ENCODE measurements at regions of chr7 and their contacts with region 1.

Region 1: DNA sequence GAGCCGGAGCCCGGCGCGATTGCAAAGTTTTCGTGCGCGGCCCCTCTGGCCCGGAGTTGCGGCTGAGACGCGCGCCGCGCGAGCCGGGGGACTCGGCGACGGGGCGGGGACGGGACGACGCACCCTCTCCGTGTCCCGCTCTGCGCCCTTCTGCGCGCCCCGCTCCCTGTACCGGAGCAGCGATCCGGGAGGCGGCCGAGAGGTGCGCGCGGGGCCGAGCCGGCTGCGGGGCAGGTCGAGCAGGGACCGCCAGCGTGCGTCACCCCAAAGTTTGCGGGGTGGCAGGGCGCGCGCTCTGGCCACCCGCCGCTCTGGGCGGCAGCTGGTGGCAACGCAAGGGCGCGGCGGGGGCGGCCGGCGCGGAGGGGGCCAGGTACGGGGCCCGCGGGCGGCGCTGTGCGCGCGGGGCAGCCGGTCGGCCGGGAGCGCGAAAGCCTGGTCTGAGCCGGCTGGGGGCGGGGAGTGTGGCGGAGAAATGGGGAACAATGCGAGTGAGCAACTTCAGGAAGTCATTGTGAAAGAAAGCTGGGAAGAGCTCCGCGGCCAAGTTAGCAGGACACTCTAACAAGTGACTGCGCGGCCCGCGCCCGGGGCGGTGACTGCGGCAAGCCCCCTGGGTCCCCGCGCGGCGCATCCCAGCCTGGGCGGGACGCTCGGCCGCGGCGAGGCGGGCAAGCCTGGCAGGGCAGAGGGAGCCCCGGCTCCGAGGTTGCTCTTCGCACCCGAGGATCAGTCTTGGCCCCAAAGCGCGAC is at the start of gene IKZF1:
- DNase-seq: peak; percentile 32 to 82 (median 65)
- ATAC-seq: peak; percentile 39
- H3K4me3 ChIP-seq: peak within 1 kb of the TSS; percentile 90 to 96
- H3K4me3 Mint-ChIP-seq: peak within 1 kb of the TSS; percentile 93
- H3K27ac ChIP-seq: peak within 1 kb of the TSS; percentile 91 to 96
- H3K27ac Mint-ChIP-seq: peak within 1 kb of the TSS; percentile 96
- H3K4me1 ChIP-seq: peaks cover 51% of the 10 kb centered on the region
- H3K4me1 Mint-ChIP-seq: peaks cover 51% of the 10 kb centered on the region
- H3K27me3 ChIP-seq: no peaks in the 10 kb centered on the region
- H3K27me3 Mint-ChIP-seq: no peaks in the 10 kb centered on the region
- CTCF ChIP-seq: no peak
- total RNA-seq, gene IKZF1: 248 TPM

Region 2: DNA sequence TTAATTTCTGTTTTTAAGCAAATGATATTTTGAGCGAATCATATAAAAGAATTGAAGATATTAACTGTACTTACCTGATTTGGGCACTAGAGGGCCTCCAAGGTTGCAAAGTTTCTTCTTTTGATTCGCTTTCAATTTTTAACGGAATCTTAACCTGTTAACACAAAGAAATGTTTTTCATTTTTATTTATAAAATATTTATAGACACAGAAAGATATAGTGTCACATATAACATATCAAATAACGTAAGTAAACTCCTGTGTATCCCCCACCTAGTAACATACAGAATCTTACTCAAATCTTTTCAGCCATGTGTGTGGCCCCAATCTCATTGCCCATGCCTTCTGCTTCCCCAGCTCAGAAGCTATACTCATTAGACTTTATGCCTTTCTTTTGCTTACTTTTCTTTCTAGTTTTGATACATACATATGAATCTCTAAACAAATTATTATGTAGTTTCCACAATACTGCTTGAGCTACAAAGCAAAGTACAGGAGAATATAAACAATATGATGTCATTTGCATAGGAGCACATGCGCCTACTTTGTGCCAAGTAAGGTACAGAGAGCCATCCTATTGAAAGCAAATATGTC is 161.8 kb before region 1 on chr7:
- CTCF ChIA-PET with region 1: no interaction called
- POLR2A ChIA-PET with region 1: no interaction called
- intact Hi-C with region 1: loop called in 1 of 2 experiments (anchors 5 kb)
- DNase-seq: peak in 4 of 9 experiments; percentile 38 to 78 (median 59)
- ATAC-seq: peak; percentile 85
- H3K4me3 ChIP-seq: no peak overlapping the region
- H3K4me3 Mint-ChIP-seq: peak overlapping the region; percentile 57
- H3K27ac ChIP-seq: no peak overlapping the region
- H3K27ac Mint-ChIP-seq: peak overlapping the region; percentile 84
- H3K4me1 ChIP-seq: peaks cover 5% of the 10 kb centered on the region
- H3K4me1 Mint-ChIP-seq: peaks cover 15% of the 10 kb centered on the region
- H3K27me3 ChIP-seq: no peaks in the 10 kb centered on the region
- H3K27me3 Mint-ChIP-seq: no peaks in the 10 kb centered on the region
- CTCF ChIP-seq: peak; percentile 91

Region 3: DNA sequence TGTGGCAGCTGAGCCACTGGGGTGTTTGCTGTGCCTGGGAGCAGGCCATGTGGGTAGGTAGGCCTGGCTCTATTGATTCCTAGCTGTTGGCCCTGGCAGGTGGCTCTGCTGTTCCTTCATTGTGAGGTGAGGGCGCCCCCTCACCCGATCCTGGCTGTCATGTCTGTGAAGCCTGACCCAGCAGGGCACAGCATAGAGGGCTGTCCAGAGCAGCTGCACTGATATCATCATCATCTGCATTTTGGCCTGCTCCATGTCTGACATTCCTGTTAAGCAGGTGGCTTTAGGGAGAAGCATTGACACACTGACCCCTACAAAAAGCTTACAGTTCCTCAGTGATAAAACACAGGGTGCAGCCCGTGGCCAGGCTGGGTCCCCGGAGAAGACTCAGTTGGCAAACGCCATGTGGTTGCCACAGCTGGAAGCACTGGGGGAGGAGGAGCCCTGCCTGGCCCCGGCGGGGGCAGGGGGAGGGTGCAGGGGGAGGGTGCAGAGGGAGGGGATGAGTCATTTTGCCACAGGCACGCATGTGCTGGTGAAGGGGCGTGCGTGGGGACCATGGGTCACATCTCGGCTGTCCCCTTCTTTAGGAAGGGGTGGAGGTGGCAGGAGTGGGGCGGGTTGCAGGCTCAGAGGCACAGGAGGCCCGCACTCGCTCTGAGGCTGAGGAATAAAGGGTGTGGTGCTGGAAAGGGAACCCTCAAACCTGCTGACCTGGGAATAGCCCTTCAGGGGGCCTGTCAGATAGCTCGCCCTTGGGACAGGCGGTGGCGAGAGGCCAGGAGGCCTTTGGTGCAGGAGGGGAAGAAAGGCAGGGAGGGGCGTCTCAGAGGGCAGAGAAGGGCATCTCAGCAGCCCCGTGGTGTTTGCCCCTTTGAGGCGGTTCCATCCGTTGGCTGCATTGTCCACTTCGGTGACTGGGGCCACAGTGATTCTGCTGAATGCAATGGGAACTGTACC is 31.7 kb after region 1 on chr7:
- CTCF ChIA-PET with region 1: interaction called, 121 read pairs
- POLR2A ChIA-PET with region 1: interaction called, 1,039 read pairs
- intact Hi-C with region 1: loop called (anchors 1 to 2 kb)
- DNase-seq: peak; percentile 55 to 91 (median 84)
- ATAC-seq: peak; percentile 55
- H3K4me3 ChIP-seq: peak overlapping the region; percentile 10 to 19
- H3K4me3 Mint-ChIP-seq: peak overlapping the region; percentile 77
- H3K27ac ChIP-seq: peak overlapping the region; percentile 40 to 90
- H3K27ac Mint-ChIP-seq: no peak overlapping the region
- H3K4me1 ChIP-seq: peaks cover 99% of the 10 kb centered on the region
- H3K4me1 Mint-ChIP-seq: peaks cover 35% of the 10 kb centered on the region
- H3K27me3 ChIP-seq: no peaks in the 10 kb centered on the region
- H3K27me3 Mint-ChIP-seq: no peaks in the 10 kb centered on the region
- CTCF ChIP-seq: no peak

Region 4: DNA sequence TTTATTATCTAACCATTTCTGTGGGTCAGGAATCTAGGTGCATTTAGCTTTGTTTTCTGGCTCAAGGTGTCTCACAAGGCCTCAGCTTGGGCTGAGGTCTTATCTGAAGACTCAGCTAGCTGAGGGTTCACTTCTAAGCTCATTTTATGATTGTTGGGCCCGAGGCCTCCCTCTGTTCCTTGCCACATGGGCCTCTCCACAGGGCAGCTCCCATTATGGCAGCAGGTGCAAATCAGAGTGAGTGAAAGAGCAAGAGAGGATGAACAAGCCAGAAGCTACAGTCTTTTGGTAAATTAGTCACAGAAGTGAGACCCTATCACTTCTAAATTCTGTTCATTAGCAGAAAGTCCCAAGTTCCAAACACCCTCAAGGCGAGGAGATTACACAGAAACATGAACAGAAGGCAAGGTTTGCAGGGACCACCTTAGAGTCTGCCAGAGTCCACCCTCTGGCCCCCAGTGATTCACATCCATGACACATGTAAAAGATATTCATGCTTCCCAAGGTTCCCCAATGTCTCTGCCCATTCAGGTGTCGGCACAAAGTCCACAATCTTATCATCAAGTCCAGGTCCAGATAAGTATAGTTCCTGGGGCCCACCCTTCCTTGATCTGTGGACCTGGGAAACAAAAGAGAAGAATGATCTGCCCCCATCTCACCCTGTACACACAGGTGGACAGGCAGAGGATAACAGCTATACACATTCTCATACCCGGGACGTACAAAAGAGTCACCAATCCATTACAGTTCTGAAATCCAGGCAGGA is 122.1 kb after region 1 on chr7:
- CTCF ChIA-PET with region 1: no interaction called
- POLR2A ChIA-PET with region 1: no interaction called
- intact Hi-C with region 1: no loop called
- DNase-seq: no peak
- ATAC-seq: no peak
- H3K4me3 ChIP-seq: no peak overlapping the region
- H3K4me3 Mint-ChIP-seq: no peak overlapping the region
- H3K27ac ChIP-seq: no peak overlapping the region
- H3K27ac Mint-ChIP-seq: no peak overlapping the region
- H3K4me1 ChIP-seq: no peaks in the 10 kb centered on the region
- H3K4me1 Mint-ChIP-seq: no peaks in the 10 kb centered on the region
- H3K27me3 ChIP-seq: no peaks in the 10 kb centered on the region
- H3K27me3 Mint-ChIP-seq: no peaks in the 10 kb centered on the region
- CTCF ChIP-seq: no peak

Measured in CD8-positive, alpha-beta T cell (primary cell).